A673 (cell line): ENCODE measurements at regions of chr2 and their contacts with region 1.

Region 1: GRCh38 chr2:165811592-165812370 is 17.7 kb upstream of the GALNT3 start:
- DNase-seq: no peak
- H3K4me3 ChIP-seq: no peak overlapping the region
- H3K27ac ChIP-seq: no peak overlapping the region
- H3K4me1 ChIP-seq: no peaks in the 10 kb centered on the region
- H3K27me3 ChIP-seq: no peaks in the 10 kb centered on the region
- CTCF ChIP-seq: no peak

Region 2: GRCh38 chr2:165796819-165797530 is 14.8 kb before region 1 on chr2:
- CTCF ChIA-PET with region 1: no interaction called
- POLR2A ChIA-PET with region 1: interaction called, 17 read pairs
- intact Hi-C with region 1: no loop called
- DNase-seq: no peak
- H3K4me3 ChIP-seq: no peak overlapping the region
- H3K27ac ChIP-seq: no peak overlapping the region
- H3K4me1 ChIP-seq: no peaks in the 10 kb centered on the region
- H3K27me3 ChIP-seq: no peaks in the 10 kb centered on the region
- CTCF ChIP-seq: no peak

Region 3: DNA sequence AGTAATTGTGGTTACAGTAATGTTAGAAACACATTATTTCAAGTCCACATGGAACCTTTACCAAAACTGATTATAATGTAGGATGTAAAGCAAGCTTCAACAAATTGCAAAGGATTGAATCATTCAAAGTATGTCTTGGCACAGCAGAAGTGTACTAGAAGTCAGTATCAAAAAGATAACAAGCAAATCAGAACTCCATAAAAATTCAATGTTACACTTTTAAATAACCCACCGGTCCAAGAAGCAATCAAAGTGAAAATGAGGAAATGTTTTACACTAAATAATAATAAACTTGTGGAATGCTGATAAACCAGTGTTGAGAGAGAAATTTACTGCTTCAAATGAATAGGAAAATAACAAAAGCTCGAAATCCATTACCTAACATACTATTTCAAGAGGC is 94.1 kb after region 1 on chr2:
- CTCF ChIA-PET with region 1: no interaction called
- POLR2A ChIA-PET with region 1: interaction called, 12 read pairs
- intact Hi-C with region 1: no loop called
- DNase-seq: no peak
- H3K4me3 ChIP-seq: no peak overlapping the region
- H3K27ac ChIP-seq: no peak overlapping the region
- H3K4me1 ChIP-seq: peaks cover 7% of the 10 kb centered on the region
- H3K27me3 ChIP-seq: no peaks in the 10 kb centered on the region
- CTCF ChIP-seq: no peak